ENCODE measurements at regions of chr11 and their contacts with region 1.

Region 1: DNA sequence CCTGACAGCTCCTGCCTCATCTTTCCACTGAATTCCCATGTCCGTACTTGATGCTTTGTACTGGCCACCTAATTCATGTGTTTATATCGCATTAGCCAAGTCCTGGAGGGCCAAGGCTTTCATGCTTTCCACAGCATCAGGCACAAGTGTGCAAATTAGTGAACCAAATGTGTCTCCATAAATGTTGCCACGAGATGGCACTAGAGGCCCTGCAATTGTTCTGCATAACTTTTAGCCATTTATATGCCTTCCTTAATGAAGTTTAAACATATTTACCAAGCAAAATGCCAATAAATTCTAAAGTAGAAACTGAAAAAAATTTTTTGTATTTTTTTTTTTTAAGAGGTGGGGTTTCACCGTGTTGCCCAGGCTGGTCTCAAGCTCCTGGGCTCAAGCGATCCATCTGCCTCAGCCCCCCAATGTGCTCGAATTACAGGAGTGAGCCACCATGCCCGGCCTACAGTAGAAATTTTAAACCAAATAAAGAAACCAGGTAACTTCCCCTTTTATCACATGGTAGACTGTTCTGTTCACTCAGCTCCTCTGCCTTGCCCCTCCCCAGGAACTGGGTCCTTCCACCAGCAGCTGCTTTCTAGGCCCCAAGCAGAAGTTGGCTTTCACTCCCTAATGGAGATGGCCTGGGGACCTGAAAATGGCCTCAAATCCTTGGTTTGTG is 20.8 kb upstream of the IL18BP start:
- DNase-seq: peak; percentile 72
- H3K4me3 Mint-ChIP-seq: no peak overlapping the region
- H3K27ac Mint-ChIP-seq: no peak overlapping the region
- H3K4me1 Mint-ChIP-seq: no peaks in the 10 kb centered on the region
- H3K27me3 Mint-ChIP-seq: no peaks in the 10 kb centered on the region

Region 2: GRCh38 chr11:71934213-71934612 is 43.7 kb before region 1 on chr11:
- CTCF ChIA-PET with region 1: no interaction called
- intact Hi-C with region 1: no loop called
- DNase-seq: peak; percentile 19
- H3K4me3 Mint-ChIP-seq: no peak overlapping the region
- H3K27ac Mint-ChIP-seq: no peak overlapping the region
- H3K4me1 Mint-ChIP-seq: peaks cover 55% of the 10 kb centered on the region
- H3K27me3 Mint-ChIP-seq: no peaks in the 10 kb centered on the region

Region 3: GRCh38 chr11:71962428-71963038 is 15.3 kb before region 1 on chr11:
- CTCF ChIA-PET with region 1: interaction called, 21 read pairs
- intact Hi-C with region 1: no loop called
- DNase-seq: no peak
- H3K4me3 Mint-ChIP-seq: no peak overlapping the region
- H3K27ac Mint-ChIP-seq: peak overlapping the region; percentile 66
- H3K4me1 Mint-ChIP-seq: peaks cover 18% of the 10 kb centered on the region
- H3K27me3 Mint-ChIP-seq: no peaks in the 10 kb centered on the region

Region 4: GRCh38 chr11:72015511-72016171 is 37.8 kb after region 1 on chr11:
- CTCF ChIA-PET with region 1: interaction called, 10 read pairs
- intact Hi-C with region 1: no loop called
- DNase-seq: peak; percentile 35
- H3K4me3 Mint-ChIP-seq: no peak overlapping the region
- H3K27ac Mint-ChIP-seq: peak overlapping the region; percentile 46
- H3K4me1 Mint-ChIP-seq: no peaks in the 10 kb centered on the region
- H3K27me3 Mint-ChIP-seq: no peaks in the 10 kb centered on the region

Region 5: DNA sequence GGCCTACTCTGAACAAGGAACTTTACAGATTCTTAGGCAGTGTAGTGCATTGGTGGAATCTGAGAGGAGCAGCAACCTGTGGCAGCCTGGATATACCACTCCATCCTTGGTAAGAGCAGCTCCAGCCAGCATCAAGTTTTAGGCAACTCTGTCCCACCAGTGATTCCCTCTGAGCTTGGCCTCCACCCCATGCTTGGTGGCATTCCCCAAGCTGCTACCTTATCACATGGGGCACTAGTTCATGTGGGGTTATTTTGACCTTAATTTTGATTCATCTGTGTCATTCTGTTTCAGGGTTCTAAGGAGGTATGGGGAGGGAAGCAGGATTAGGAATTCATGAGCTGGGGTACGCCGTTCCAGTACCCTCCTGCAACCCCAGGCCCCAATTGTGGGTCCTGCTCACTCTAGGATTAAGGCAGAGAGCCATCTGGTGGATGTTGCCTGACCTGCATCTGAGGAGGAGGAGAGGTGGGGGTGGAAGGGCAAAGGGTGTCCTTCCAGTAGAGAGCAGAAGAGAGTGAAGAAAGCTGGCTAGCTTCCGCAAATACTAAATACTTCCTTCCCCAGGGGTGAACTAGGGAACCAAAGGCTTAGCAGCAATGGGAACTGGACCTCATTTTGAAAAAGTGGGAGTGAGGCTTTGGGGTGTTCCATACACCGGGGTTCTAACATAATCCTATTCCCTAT is 113.3 kb after region 1 on chr11:
- CTCF ChIA-PET with region 1: interaction called, 8 read pairs
- intact Hi-C with region 1: loop called (anchors 1 kb)
- DNase-seq: peak; percentile 83
- H3K4me3 Mint-ChIP-seq: no peak overlapping the region
- H3K27ac Mint-ChIP-seq: no peak overlapping the region
- H3K4me1 Mint-ChIP-seq: peaks cover 14% of the 10 kb centered on the region
- H3K27me3 Mint-ChIP-seq: no peaks in the 10 kb centered on the region

Measured in activated naive CD4-positive, alpha-beta T cell treated with anti-CD3 and anti-CD28 coated beads for 36 hours (primary cell).